Ovary (tissue), 10 donors: ENCODE measurements at regions of chr2 and their contacts with region 1.

Region 1: GRCh38 chr2:38535744-38536506 is 66.8 kb downstream of the HNRNPLL start:
- DNase-seq: peak; percentile 82 to 93 (median 91)
- H3K4me3 ChIP-seq: peak overlapping the region; percentile 46
- H3K27ac ChIP-seq: no peak overlapping the region
- H3K4me1 ChIP-seq: no peaks in the 10 kb centered on the region
- H3K27me3 ChIP-seq: no peaks in the 10 kb centered on the region
- CTCF ChIP-seq: peak; percentile 91 to 98 (median 92)
- EP300 ChIP-seq: no peak
- POLR2A ChIP-seq: no peak

Region 2: DNA sequence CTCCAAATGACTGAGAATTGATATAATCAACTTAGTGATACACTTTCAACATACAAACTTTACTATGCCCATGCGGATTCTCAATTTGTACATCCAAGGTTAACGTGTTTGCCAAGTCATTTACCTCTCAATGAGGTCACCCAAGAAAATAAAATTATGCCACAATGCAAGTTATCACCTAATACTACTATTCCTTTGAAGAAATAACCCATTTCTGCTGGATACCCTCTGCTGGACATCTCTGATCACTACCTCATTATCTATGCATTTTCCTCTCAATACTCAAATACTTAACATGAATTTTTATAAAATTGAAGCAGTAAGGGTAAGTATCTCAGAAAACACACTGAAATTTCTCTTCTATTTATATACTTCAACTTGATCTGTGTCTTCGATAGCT is 54.1 kb after region 1 on chr2:
- intact Hi-C with region 1: loop called in 1 of 4 experiments (anchors 10 kb)
- DNase-seq: no peak
- H3K4me3 ChIP-seq: no peak overlapping the region
- H3K27ac ChIP-seq: no peak overlapping the region
- H3K4me1 ChIP-seq: peaks cover 11% of the 10 kb centered on the region
- H3K27me3 ChIP-seq: no peaks in the 10 kb centered on the region
- CTCF ChIP-seq: no peak
- EP300 ChIP-seq: no peak
- POLR2A ChIP-seq: no peak